ENCODE measurements at regions of chr12 and their contacts with region 1.

Region 1: DNA sequence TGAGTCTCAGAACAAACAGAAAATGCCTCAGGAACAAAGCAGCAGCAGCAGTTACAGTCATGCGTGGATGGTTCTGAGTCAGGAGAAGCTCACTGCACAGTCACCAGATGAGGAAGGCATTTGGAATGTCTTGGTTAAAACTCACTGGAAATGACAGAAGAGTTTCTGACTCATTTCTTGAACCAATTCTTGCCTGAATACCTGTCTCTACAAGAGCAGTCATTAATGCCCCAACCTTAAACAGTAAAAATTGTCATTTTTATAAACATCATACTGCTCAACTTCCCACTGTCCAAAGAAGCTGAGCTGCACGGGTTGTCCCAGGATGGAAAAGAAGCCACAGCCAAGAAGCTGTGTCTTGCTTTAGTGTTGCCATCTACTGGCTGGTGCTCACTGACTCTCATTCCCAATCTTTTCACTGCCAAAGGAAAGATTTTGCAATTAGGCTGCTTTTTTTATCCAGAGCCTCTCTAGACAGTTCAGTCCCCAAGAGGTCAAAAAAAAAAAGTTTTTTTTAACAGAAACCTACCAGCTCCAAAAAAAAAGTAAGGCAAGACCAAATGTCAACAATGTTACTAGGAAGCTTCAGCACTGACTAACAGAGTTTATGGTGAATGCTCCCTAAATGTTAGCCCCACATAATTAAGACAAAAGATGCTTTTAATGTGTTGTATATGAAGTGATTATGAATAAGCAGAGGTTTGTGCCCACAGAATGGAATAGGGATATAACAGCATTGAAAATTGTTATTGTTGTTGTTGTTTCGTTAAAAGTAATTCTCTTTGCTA is 40.4 kb downstream of the KICS2 start:
- DNase-seq: peak; percentile 16
- ATAC-seq: peak; percentile 93
- H3K4me3 Mint-ChIP-seq: no peak overlapping the region
- H3K27ac Mint-ChIP-seq: 0 out of 2 replicates have a peak overlapping the region, but pooled peaks have one; percentile 34
- H3K4me1 Mint-ChIP-seq: no peaks in the 10 kb centered on the region
- H3K27me3 Mint-ChIP-seq: no peaks in the 10 kb centered on the region; the same call in 1 of the 2 replicates
- CTCF ChIP-seq: no peak

Region 2: DNA sequence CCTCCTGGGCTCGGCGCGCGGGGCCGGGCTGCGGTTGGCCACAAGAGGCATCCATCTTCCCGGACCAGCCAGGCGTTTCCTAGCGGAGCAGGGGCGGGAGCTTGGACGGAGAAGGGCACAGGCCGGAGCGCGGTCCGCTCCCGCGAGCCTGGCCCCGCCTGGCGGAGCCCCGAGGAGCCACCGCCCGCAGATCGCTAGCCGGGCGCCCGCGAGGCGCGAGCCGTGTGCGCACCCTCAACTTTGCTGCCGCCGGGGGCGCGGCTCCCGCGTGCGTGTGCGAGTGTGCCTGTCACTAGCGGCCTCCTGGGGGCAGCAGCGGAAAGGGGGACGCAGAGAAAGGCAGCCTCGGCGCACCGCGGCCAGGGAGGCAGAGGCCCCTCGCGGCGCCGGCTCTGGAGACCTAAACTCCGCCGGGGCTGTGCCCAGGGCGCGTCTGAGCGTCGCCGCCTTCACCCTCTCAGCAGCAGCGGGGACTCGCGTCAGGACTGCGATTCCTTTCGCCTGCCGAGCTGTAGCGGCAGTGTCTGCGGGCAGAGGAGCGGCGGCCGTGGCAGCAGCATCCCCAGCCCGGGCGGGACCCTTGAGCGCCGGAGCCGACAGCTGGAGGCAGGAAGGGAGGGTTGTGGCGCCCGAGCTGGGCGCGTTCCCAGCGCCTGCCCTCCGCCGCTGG is 337.8 kb before region 1 on chr12:
- CTCF ChIA-PET with region 1: interaction called, 26 read pairs
- POLR2A ChIA-PET with region 1: interaction called, 4 read pairs
- DNase-seq: peak; percentile 87
- ATAC-seq: peak; percentile 87
- H3K4me3 Mint-ChIP-seq: peak overlapping the region; percentile 68
- H3K27ac Mint-ChIP-seq: no peak overlapping the region
- H3K4me1 Mint-ChIP-seq: peaks cover 22% of the 10 kb centered on the region
- H3K27me3 Mint-ChIP-seq: peaks cover 4% of the 10 kb centered on the region
- CTCF ChIP-seq: peak; percentile 73

Region 3: GRCh38 chr12:64103825-64104740 is 77.6 kb before region 1 on chr12:
- CTCF ChIA-PET with region 1: no interaction called
- POLR2A ChIA-PET with region 1: no interaction called
- DNase-seq: no peak
- ATAC-seq: no peak
- H3K4me3 Mint-ChIP-seq: no peak overlapping the region
- H3K27ac Mint-ChIP-seq: no peak overlapping the region
- H3K4me1 Mint-ChIP-seq: no peaks in the 10 kb centered on the region
- H3K27me3 Mint-ChIP-seq: no peaks in the 10 kb centered on the region
- CTCF ChIP-seq: no peak